H1 (cell line): ENCODE measurements at regions of chr11 and their contacts with region 1.

Region 1: DNA sequence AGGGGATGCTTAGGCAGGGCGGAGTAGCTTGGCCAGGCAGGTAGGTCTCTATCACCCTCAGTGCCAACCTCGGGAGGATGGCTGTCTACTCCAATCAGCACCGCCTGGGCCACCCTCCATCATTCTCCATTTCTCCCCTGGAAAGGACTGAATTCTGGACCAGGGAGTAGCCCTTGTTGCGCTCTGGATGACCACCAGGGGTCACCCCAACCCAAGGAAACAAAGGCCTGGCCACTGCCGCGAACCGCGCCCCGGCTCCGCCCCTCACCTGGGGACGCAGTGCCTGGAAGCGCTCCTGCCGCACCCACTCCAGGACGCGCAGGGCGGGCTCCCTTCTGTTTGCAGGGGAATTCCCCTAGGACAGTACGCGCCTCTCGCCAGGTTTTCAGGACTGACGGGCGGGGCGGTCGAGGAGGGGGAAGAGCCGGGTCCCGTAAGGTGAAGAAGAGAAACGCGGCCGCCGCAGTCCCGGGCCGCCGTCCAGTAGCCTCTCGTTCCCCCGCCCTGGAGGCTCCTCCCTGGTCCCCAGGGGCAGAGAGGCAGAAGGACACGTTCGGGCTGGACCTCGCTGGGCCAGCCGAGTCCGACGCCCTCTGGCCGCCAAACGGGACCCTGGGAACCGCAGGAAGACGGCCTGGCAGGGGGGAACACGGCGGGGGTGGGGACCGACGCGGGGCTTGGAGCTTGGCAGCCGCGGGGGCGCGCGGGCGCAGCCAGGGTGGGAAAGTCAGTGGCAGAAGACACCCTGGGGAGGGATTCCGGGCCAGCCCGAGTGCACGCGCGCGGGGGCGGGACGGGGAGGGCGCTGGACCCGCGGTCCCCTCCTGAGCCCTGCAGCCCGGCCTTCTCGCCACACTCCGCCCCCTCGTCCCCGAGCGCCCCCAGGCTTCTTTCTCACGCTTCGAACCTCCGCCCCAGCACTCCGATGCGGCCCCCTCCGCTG is 7.1 kb downstream of the SCN4B start:
- DNase-seq: peak; percentile 66 to 97
- H3K4me3 ChIP-seq: peak overlapping the region; percentile 34 to 70 (median 53)
- H3K27ac ChIP-seq: no peak overlapping the region
- H3K4me1 ChIP-seq: peaks cover 0 to 21% (median 7%) of the 10 kb centered on the region in 4 experiments; a peak in 6 of 7 replicates
- H3K27me3 ChIP-seq: peaks cover 0 to 31% (median 17%) of the 10 kb centered on the region in 4 experiments; a peak in 6 of 7 replicates
- CTCF ChIP-seq: peak; percentile 75 to 90 (median 90)
- EP300 ChIP-seq: no peak
- POLR2A ChIP-seq: no peak
- RAD21 ChIP-seq: peak; percentile 97 to 99

Region 2: DNA sequence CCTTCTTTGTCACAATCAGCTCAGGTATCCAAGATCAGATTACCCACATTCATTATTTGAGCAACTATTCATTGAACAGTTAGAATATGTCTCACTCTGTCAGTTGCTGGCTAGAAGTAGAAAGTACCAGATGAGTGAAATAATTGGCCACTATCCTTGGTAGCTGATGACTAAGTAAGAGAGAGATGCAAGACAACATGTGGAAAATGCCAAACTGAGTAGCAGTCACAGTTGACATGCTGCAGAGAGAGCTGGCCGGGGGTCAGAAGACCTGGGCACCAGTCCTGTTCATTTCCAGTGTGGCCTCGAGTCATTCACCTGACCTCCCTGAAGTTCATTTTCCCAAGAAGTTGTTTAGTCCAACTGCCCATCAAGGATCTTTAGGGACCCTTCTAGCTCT is 36.3 kb before region 1 on chr11:
- CTCF ChIA-PET with region 1: no interaction called
- POLR2A ChIA-PET with region 1: no interaction called
- DNase-seq: no peak
- H3K4me3 ChIP-seq: no peak overlapping the region
- H3K27ac ChIP-seq: no peak overlapping the region
- H3K4me1 ChIP-seq: peaks cover 0 to 3% (median under 1%) of the 10 kb centered on the region in 4 experiments; a peak in 4 of 7 replicates
- H3K27me3 ChIP-seq: no peaks in the 10 kb centered on the region; a peak in 1 of 7 replicates
- CTCF ChIP-seq: no peak
- EP300 ChIP-seq: no peak
- POLR2A ChIP-seq: no peak
- RAD21 ChIP-seq: no peak

Region 3: DNA sequence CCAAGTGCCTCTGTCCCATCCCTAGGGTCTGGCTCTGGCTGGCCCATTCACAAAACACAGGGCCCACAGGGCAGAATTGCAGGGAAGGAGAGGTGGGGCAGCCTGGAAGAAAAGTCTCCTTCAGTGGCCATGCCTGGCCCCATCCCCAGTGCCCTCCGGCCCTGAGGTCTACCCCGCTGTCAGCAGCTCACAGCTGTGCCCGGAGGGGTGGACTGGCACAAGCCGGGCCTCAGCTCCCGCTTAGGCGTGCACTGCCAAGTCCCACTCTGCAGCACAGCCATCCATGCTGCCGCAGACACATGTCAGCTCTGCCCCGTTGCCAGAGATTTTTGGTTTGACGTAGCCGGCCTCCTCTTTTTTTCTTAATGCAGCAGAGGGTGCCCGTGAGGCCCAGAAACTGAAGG is 34.7 kb after region 1 on chr11:
- CTCF ChIA-PET with region 1: interaction called, 23 read pairs
- POLR2A ChIA-PET with region 1: interaction called, 3 read pairs
- DNase-seq: peak in 1 of 2 experiments; percentile 77
- H3K4me3 ChIP-seq: peak overlapping the region in 3 of 4 experiments; percentile 8 to 42 (median 10); a peak in 5 of 8 replicates
- H3K27ac ChIP-seq: no peak overlapping the region
- H3K4me1 ChIP-seq: peaks cover 7 to 21% (median 11%) of the 10 kb centered on the region in 4 experiments
- H3K27me3 ChIP-seq: peaks cover 0 to 8% (median 7%) of the 10 kb centered on the region in 4 experiments; a peak in 5 of 7 replicates
- CTCF ChIP-seq: peak in 2 of 3 experiments; percentile 8; a peak in 2 of 4 replicates
- EP300 ChIP-seq: no peak
- POLR2A ChIP-seq: no peak
- RAD21 ChIP-seq: peak; percentile 11 to 19; a peak in 1 of 4 replicates